ENCODE measurements at regions of chr1 and their contacts with region 1.

Region 1: DNA sequence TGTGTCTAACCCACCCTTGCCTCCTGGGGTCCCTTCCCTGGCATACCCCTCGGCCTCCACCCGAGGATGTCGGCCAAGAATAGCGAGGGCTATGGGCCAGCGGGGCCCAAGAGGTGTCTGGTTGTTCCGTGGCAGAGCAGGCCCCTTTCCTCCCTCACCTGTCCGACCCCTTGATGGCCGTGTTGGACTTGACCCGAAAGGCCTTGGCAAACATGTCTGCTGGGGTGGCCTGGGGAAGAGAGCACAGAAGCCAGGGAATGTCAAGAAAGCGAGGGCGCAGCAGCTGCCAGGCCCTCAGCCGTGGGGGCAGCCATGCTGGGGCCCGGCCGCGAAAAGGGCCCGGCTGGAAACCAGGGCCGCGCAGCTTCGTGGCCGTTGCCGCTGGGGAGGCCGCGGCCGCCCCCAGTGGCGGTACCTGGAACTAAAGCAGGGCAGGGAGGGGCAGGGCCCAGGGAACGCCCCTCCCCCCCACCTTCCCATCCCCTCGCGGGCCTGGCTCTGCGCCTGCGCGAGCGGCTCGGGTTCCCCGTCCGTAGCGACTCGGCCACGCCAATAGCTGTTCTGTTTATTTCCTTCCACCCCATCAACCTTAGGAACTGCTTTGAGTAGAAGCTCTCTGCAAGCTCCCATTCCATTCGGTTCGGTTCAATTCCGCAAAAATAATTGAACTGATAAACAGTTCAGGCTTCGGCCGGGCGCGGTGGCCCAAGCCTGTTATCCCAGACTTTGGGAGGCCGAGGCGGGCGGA is at the start of gene EIF2D:
- DNase-seq: peak; percentile 90 to 96 (median 92)
- H3K4me3 ChIP-seq: peak within 1 kb of the TSS; percentile 62 to 77
- H3K4me3 Mint-ChIP-seq: peak within 1 kb of the TSS; percentile 91 to 95 (median 93)
- H3K27ac ChIP-seq: peak within 1 kb of the TSS; percentile 80
- H3K27ac Mint-ChIP-seq: peak within 1 kb of the TSS; percentile 87 to 98 (median 96)
- H3K4me1 ChIP-seq: peaks cover 12% of the 10 kb centered on the region
- H3K4me1 Mint-ChIP-seq: peaks cover 12 to 34% (median 21%) of the 10 kb centered on the region in 4 donors
- H3K27me3 ChIP-seq: no peaks in the 10 kb centered on the region
- H3K27me3 Mint-ChIP-seq: no peaks in the 10 kb centered on the region
- total RNA-seq, gene EIF2D: 53.5 to 54.5 TPM

Region 2: GRCh38 chr1:206556750-206557635 is 55.3 kb before region 1 on chr1:
- CTCF ChIA-PET with region 1: interaction called, 9 read pairs
- POLR2A ChIA-PET with region 1: interaction called, 15 read pairs
- intact Hi-C with region 1: loop called (anchors 2 kb)
- DNase-seq: peak; percentile 87 to 93 (median 90)
- H3K4me3 ChIP-seq: peak overlapping the region; percentile 95 to 96
- H3K4me3 Mint-ChIP-seq: peak overlapping the region; percentile 90 to 99 (median 98)
- H3K27ac ChIP-seq: peak overlapping the region; percentile 77
- H3K27ac Mint-ChIP-seq: peak overlapping the region; percentile 93 to 98 (median 96)
- H3K4me1 ChIP-seq: peaks cover 76% of the 10 kb centered on the region
- H3K4me1 Mint-ChIP-seq: peaks cover 49 to 93% (median 63%) of the 10 kb centered on the region in 4 donors
- H3K27me3 ChIP-seq: no peaks in the 10 kb centered on the region
- H3K27me3 Mint-ChIP-seq: no peaks in the 10 kb centered on the region

Region 3: DNA sequence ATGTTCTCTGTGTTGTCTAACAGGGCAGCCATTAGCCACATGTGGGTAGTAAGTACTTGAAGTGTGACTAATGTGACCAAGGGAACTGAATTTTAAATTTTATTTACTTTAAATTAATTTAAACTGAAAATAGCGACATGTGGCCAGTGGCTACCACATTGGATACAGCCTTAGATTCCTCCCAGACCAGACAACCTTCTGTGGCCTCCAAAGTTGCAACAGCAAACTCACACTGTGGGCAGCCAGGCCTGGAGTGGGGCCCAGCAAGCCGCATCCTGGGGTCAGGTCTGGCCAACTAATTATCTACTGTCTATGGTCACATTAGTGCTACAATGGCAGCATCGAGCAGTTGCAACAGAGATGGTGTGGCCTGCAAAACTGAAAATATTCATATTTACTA is 11.8 kb before region 1 on chr1:
- CTCF ChIA-PET with region 1: interaction called, 13 read pairs
- POLR2A ChIA-PET with region 1: interaction called, 5 read pairs
- intact Hi-C with region 1: no loop called
- DNase-seq: no peak
- H3K4me3 ChIP-seq: no peak overlapping the region
- H3K4me3 Mint-ChIP-seq: no peak overlapping the region
- H3K27ac ChIP-seq: no peak overlapping the region
- H3K27ac Mint-ChIP-seq: no peak overlapping the region
- H3K4me1 ChIP-seq: no peaks in the 10 kb centered on the region
- H3K4me1 Mint-ChIP-seq: no peaks in the 10 kb centered on the region
- H3K27me3 ChIP-seq: no peaks in the 10 kb centered on the region
- H3K27me3 Mint-ChIP-seq: no peaks in the 10 kb centered on the region

Region 4: DNA sequence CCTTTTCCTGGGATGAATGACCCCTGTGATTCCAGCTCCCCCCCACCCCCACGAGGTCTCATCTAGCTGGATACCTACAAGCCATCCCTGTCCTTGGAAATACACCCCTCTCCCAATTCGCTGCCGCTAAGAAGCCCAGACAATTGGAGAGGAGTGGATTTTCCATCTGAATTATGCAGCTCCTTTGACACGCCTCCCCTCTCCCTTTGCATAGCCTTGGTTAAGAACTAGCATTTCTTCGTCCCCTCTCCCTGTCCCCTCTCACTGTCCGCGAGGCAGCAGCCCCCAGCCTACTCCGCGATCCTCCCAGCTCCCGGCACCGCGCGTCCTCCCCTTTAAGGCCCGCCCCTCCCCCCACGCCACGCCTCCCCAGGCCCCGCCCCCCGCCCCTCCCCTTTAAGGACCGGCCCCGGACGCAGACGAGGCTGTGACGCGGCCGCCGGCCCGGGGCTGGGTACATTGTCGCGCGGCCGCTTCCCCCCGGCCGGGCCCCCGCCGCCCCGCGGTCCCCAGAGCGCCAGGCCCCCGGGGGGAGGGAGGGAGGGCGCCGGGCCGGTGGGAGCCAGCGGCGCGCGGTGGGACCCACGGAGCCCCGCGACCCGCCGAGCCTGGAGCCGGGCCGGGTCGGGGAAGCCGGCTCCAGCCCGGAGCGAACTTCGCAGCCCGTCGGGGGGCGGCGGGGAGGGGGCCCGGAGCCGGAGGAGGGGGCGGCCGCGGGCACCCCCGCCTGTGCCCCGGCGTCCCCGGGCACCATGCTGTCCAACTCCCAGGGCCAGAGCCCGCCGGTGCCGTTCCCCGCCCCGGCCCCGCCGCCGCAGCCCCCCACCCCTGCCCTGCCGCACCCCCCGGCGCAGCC is 72.4 kb after region 1 on chr1 and contains the start of gene MAPKAPK2:
- CTCF ChIA-PET with region 1: interaction called, 3 read pairs
- POLR2A ChIA-PET with region 1: interaction called, 5 read pairs
- intact Hi-C with region 1: loop called (anchors 2 kb)
- DNase-seq: peak; percentile 71 to 77 (median 73)
- H3K4me3 ChIP-seq: peak within 1 kb of the TSS; percentile 55 to 93
- H3K4me3 Mint-ChIP-seq: peak within 1 kb of the TSS; percentile 93 to 100 (median 96)
- H3K27ac ChIP-seq: peak within 1 kb of the TSS; percentile 90
- H3K27ac Mint-ChIP-seq: peak within 1 kb of the TSS; percentile 94 to 98 (median 97)
- H3K4me1 ChIP-seq: peaks cover 45% of the 10 kb centered on the region
- H3K4me1 Mint-ChIP-seq: peaks cover 26 to 52% (median 37%) of the 10 kb centered on the region in 4 donors
- H3K27me3 ChIP-seq: no peaks in the 10 kb centered on the region
- H3K27me3 Mint-ChIP-seq: peaks cover 2 to 3% of the 10 kb centered on the region in 2 donors
- total RNA-seq, gene MAPKAPK2: 71.7 to 72.8 TPM

Measured in CD4-positive, alpha-beta memory T cell (primary cell).